ENCODE measurements at regions of chr10 and their contacts with region 1.

Region 1: GRCh38 chr10:119555178-119555784 is 12.8 kb upstream of the RGS10 start:
- H3K4me3 ChIP-seq: no peak overlapping the region
- H3K27ac ChIP-seq: no peak overlapping the region
- H3K4me1 ChIP-seq: no peaks in the 10 kb centered on the region
- CTCF ChIP-seq: no peak

Region 2: DNA sequence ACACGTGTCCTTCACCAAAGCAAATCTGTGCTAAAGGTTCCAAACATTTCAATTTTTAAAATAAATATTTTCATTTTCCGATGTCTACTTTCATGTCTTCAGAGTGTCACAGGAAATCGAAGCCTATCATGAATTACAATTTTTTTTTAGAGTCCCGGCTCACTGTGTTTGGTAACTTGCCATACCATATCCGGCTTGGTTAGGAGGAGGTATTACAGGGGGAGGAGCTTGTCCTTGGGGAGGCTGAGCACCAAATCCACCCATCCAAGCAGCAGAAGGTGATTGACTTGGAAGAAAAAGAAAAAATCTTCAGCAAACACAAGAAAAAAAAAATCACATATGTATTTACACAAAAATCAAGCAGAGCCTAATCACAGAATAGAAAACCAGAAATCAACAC is 20.2 kb after region 1 on chr10:
- CTCF ChIA-PET with region 1: interaction called, 10 read pairs
- POLR2A ChIA-PET with region 1: interaction called, 3 read pairs
- H3K4me3 ChIP-seq: no peak overlapping the region
- H3K27ac ChIP-seq: no peak overlapping the region
- H3K4me1 ChIP-seq: no peaks in the 10 kb centered on the region
- CTCF ChIP-seq: no peak

Measured in HEK293 (cell line).